ENCODE measurements at regions of chr11 and their contacts with region 1.

Region 1: DNA sequence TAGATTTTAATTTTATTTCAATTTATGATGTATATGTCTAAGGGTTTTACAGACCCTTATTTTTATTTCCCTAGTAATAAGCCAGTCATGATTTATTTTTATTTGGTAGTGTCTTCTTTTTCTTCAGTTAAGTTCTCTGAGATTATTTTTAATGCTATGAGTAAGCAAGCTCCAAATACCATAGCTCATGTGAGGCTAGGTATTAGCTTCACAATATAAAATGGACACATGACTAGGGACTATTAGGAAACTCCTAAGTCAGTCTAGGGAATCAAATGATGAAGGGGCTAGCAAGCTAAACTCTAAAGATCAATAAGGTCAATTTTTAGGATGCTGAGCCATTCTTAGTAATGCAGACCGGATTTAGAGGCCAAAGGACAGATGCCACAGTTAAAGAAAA is 45.9 kb downstream of the CKAP5 start:
- DNase-seq: no peak
- H3K4me3 Mint-ChIP-seq: no peak overlapping the region
- H3K27ac Mint-ChIP-seq: no peak overlapping the region
- H3K4me1 Mint-ChIP-seq: peaks cover 3% of the 10 kb centered on the region
- H3K27me3 Mint-ChIP-seq: no peaks in the 10 kb centered on the region

Region 2: DNA sequence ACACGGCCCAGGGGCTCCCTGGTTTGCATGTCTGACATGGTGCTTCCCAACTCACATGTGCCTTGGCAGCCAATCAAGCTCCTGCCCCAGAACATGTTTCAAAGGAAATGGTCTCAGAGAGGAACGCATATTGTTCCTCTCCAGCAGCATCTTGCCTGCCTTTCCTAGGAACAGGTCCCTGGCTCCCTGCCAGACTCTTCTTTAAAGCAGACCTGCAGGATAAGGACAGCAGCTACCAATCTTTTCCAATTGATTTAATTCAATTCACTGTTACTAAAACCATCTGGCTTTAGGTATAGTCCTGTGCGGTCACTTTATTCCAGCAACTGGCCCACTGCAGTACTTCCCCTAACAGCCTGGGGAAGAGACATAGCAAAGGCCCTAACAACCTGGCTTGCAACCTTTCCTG is 286.2 kb before region 1 on chr11:
- intact Hi-C with region 1: no loop called
- DNase-seq: no peak
- H3K4me3 Mint-ChIP-seq: no peak overlapping the region
- H3K27ac Mint-ChIP-seq: no peak overlapping the region
- H3K4me1 Mint-ChIP-seq: peaks cover 9% of the 10 kb centered on the region
- H3K27me3 Mint-ChIP-seq: no peaks in the 10 kb centered on the region

Region 3: GRCh38 chr11:46760429-46761128 is 39.6 kb before region 1 on chr11:
- intact Hi-C with region 1: loop called (anchors 5 kb)
- DNase-seq: no peak
- H3K4me3 Mint-ChIP-seq: no peak overlapping the region
- H3K27ac Mint-ChIP-seq: no peak overlapping the region
- H3K4me1 Mint-ChIP-seq: no peaks in the 10 kb centered on the region
- H3K27me3 Mint-ChIP-seq: no peaks in the 10 kb centered on the region

Region 4: DNA sequence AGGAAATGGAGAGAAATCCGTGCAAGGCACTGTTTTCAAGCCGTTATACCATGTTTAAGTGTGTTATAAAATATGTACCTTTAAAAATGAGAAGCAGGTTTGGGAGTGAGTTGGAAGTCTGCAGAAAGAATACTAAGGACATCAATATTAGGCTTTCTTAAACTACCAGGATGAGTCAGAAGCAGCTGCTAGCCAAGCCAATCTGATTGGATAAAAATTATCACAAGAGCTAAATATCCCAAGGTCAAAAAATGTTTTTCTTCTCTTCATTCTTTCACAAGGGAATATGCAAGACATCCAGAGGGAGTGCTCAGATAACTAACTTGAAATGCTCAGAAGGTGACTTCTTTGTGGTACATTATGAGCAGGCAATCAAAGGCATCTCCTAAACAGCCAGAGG is 65.2 kb after region 1 on chr11:
- intact Hi-C with region 1: no loop called
- DNase-seq: no peak
- H3K4me3 Mint-ChIP-seq: no peak overlapping the region
- H3K27ac Mint-ChIP-seq: no peak overlapping the region
- H3K4me1 Mint-ChIP-seq: no peaks in the 10 kb centered on the region
- H3K27me3 Mint-ChIP-seq: peaks cover 24% of the 10 kb centered on the region